ENCODE measurements at regions of chr7 and their contacts with region 1.

Region 1: DNA sequence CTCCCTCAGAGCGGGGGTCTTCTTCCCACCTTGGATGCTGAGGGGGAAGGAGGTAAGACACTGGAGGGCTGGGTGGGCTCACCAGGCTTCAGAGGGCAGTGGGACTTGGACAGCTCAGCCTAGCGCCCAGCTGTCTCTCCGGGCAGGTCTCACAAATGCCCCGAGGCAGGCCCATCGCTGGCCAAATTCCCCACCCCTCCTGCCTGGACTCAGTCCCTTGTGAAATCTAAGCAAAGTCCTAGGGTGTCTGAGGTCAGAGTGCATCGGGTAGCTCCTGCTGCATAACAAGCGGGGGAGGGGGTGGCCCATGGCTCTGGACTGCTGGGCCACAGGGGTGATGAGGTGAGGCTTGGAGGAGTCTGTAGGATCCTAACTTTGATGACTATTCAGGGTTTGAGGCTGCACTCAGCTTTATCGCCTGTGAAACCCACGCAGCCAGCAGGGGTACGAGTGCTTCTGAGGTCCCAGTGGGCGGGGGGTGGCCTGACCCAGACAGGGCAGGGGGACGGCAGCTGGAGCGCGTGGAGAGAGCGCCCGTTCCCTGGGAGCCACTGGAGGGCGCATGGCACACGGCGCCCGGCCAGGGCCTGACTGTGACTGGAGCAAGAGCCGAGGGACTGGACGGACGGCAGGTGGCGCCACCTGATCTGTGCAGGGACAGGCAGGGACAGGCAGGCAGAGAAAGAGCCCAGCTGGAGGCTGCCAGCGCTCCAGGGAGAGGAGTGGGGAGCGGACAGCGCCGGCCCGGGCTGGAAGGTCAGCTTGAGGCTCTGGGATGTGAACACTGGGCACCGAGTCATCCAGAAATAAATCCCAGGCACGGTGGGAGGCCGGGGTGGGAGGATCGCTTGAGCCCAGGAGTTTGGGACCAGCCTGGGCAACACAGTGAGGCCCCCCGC is 10.0 kb downstream of the CYP2W1 start:
- DNase-seq: peak; percentile 96
- ATAC-seq: peak; percentile 99
- H3K4me3 Mint-ChIP-seq: no peak overlapping the region
- H3K27ac Mint-ChIP-seq: no peak overlapping the region
- H3K4me1 Mint-ChIP-seq: peaks cover 6% of the 10 kb centered on the region
- H3K27me3 Mint-ChIP-seq: no peaks in the 10 kb centered on the region

Region 2: DNA sequence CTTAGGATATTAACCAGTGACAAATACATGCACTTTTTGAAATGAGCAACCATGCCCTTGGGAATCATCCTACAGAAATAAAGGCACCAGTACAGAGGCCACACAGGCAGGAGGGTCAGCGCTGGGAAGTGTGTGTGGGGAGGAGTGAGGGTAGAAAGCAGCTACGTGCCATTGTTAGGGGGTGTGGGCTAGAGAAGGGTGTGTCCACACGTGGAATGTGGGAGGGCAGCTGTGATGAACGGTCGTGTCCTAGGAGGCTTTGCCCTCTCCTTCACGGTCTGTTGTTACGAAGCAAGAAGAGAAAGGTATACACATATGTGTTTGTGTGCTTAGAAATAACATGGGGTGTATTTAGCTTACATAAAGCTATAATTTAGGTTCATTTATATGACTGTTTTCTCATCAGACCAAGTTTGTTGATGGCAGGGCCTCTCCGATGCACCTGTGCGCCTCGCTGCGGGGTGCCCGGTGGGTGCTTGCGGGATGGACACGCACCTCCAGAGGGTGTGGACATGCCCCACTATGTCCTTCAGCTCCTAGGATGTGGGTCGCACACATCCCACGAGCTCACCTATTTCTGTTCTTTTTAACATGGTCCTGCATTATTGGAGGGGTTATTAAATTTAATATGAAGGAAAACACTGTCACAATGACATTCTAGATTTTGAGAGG is 133.5 kb before region 1 on chr7:
- CTCF ChIA-PET with region 1: no interaction called
- DNase-seq: no peak
- ATAC-seq: no peak
- H3K4me3 Mint-ChIP-seq: no peak overlapping the region
- H3K27ac Mint-ChIP-seq: no peak overlapping the region
- H3K4me1 Mint-ChIP-seq: no peaks in the 10 kb centered on the region
- H3K27me3 Mint-ChIP-seq: no peaks in the 10 kb centered on the region

Region 3: DNA sequence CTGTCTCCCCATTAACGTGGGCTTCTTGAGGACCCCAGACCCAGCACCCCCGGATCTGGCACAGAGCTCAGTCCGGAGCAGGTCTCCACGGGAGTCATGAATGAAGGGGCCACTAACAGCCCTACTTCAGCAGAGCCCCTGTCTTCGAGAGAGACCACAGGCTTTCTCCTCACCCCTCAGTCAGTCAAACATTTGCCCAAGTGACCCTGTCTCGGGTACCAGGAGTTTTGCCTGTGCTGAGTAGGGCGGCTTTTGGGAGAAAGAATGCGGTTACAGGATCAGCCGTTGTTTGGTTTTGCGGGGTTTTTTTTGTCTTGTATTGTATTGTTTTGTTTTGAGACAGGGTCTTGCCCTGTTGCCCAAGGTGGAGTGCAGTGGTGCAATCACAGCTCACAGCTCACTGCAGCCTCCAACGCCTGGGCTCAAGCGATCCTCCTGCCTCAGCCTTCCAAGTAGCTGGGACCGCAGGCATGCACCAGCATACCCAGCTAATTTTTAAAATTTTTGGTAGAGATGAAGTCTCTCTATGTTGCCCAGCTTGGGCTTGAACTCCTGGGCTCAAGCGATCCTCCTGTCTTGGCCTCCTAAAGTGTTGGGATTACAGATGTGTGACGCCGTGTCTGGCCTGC is 55.0 kb before region 1 on chr7:
- CTCF ChIA-PET with region 1: no interaction called
- DNase-seq: no peak
- ATAC-seq: no peak
- H3K4me3 Mint-ChIP-seq: no peak overlapping the region
- H3K27ac Mint-ChIP-seq: no peak overlapping the region
- H3K4me1 Mint-ChIP-seq: peaks cover 20% of the 10 kb centered on the region
- H3K27me3 Mint-ChIP-seq: peaks cover 18% of the 10 kb centered on the region

Region 4: DNA sequence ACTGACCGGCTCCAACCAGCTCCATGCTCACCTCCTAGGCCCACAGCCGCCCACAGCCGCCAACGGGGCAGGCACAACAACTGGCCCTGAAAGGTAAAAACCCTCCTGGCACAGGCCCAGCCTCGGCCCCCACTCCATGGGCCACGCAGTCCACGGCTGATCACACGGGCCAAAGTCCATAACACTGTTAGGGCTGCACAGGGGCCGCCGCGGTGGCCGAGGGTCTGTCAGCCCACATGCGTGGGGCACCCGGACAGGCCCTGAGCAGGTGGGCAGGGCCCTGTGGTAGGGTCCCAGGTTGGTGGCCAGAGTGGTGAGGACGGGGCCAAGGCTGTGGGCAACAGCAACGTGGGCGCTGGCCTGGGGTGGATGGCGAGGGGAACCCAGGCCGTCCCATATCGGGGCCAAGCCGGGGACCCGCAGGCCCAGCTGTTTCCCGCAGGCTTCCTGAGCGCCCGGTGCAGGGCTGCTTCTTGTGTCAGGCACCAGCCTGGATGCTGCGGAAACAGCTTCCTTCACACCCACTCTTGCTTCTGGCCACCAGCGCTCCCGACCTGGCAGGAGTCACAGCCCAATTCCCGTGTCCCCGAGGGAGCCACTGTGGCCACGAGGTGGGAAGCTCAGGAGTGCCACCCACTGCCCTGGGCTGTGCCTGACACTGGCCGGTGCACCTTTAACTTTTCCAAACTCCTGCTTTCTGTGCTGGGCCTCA is 19.2 kb after region 1 on chr7:
- CTCF ChIA-PET with region 1: interaction called, 11 read pairs
- DNase-seq: no peak
- ATAC-seq: peak; percentile 35
- H3K4me3 Mint-ChIP-seq: no peak overlapping the region
- H3K27ac Mint-ChIP-seq: no peak overlapping the region
- H3K4me1 Mint-ChIP-seq: peaks cover 3% of the 10 kb centered on the region
- H3K27me3 Mint-ChIP-seq: no peaks in the 10 kb centered on the region

Region 5: GRCh38 chr7:1044191-1045068 is 51.5 kb after region 1 on chr7 and contains the start of gene GPR146:
- CTCF ChIA-PET with region 1: interaction called, 58 read pairs
- DNase-seq: peak; percentile 93
- ATAC-seq: peak; percentile 93
- H3K4me3 Mint-ChIP-seq: peak within 1 kb of the TSS; percentile 77
- H3K27ac Mint-ChIP-seq: peak within 1 kb of the TSS; percentile 82
- H3K4me1 Mint-ChIP-seq: peaks cover 67% of the 10 kb centered on the region
- H3K27me3 Mint-ChIP-seq: no peaks in the 10 kb centered on the region
- total RNA-seq, gene GPR146: 0.40 to 2.1 TPM

Region 6: GRCh38 chr7:1065263-1066260 is 72.6 kb after region 1 on chr7:
- CTCF ChIA-PET with region 1: interaction called, 322 read pairs
- DNase-seq: peak; percentile 87
- ATAC-seq: peak; percentile 98
- H3K4me3 Mint-ChIP-seq: no peak overlapping the region
- H3K27ac Mint-ChIP-seq: no peak overlapping the region
- H3K4me1 Mint-ChIP-seq: peaks cover 2% of the 10 kb centered on the region
- H3K27me3 Mint-ChIP-seq: no peaks in the 10 kb centered on the region

Region 7: DNA sequence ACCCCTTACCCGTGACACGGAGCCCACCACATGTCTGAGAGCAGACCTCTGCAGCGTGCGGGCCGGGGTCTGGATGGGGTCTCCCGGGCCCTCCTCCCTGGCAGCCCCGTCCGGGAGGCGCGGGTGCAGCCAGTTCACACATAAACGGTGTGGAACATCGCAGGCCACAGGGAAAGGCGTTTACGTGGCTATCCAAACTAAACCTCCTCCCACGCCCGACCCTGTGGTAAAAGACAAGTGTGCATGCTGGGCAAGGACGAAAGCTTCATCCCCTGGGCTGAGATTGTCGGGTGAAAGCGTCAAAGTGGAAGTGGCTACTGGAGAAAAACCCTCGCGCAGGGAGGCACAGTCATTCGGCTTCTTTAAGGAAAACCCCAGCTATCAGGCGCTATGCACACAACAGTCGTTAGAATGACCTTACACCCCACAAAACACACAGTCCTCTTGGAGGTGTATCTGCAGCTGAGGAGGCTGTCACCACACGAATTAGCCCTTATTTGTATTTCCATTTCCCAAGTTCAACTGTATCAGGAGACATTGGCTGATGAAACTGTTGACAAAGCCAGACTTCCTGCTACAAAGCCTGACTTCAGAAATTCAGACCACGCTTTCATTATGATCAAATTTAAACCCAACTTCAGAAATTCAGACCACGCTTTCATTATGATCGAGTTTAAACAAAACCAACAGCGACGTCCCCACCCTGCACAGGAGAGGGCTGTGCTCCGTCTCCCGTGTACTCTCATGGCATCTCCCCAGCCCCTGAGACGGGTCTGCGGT is 110.2 kb after region 1 on chr7:
- CTCF ChIA-PET with region 1: interaction called, 29 read pairs
- DNase-seq: peak; percentile 67
- ATAC-seq: peak; percentile 79
- H3K4me3 Mint-ChIP-seq: peak overlapping the region; percentile 60
- H3K27ac Mint-ChIP-seq: peak overlapping the region; percentile 83
- H3K4me1 Mint-ChIP-seq: peaks cover 28% of the 10 kb centered on the region
- H3K27me3 Mint-ChIP-seq: no peaks in the 10 kb centered on the region

Region 8: DNA sequence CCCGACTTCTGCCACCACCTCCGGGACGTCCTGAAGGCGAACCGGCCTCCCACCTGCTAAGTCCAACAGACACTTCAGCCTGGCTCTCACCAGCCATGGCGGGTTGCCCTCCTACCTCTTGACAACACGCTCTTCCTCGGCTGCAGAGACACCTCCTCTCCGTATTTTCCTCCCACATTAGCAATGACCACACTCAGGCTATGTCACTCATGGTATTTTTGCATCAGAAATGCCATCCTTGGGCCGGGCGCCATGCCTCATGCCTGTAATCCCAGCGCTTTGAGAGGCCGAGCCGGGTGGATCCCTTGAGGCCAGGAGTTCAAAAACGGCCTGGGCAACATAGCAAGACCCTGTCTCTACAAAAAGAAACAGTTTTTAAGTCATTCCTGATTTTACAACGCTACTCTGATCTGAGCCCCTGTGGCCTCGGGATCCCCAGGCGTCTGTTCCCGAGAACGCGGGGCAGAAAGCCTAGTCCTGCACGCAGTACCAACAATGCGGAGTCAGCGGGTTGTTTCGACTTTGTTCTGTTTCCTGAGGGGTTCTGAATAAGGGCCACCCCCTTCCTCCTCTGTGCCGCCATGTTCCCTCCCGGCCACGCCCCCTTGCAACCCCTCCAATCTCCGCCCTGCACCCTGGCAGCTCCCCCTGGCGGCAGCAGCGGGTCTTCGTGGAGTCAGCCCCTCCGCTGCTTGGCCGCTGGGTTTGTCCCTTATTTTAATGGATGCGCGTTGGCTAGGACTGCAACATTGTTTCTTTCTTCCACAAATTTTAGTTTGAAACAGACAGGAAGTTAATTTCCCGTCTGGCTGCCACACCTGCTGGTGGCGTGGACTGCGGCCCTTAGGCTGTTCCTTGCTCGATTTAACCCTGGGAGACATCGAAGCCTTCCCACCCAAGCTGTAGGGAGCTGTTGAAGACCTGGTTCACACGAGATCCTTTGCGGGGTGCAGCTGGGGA is 176.7 kb after region 1 on chr7:
- CTCF ChIA-PET with region 1: interaction called, 12 read pairs
- DNase-seq: peak; percentile 96
- ATAC-seq: peak; percentile 99
- H3K4me3 Mint-ChIP-seq: peak overlapping the region; percentile 80
- H3K27ac Mint-ChIP-seq: peak overlapping the region; percentile 95
- H3K4me1 Mint-ChIP-seq: peaks cover 14% of the 10 kb centered on the region
- H3K27me3 Mint-ChIP-seq: no peaks in the 10 kb centered on the region

Measured in activated CD8-positive, alpha-beta memory T cell treated with anti-CD3 and anti-CD28 coated beads, Interleukin-2, amount 10 ng/mL, durations not matched to agents 7 days and 5 days (primary cell).